ENCODE measurements at regions of chr10 and their contacts with region 1.

Region 1: GRCh38 chr10:112969542-112969941 is 19.5 kb downstream of the TCF7L2 start:
- DNase-seq: no peak
- ATAC-seq: no peak
- H3K4me3 ChIP-seq: no peak overlapping the region
- H3K4me3 Mint-ChIP-seq: no peak overlapping the region
- H3K27ac ChIP-seq: no peak overlapping the region
- H3K27ac Mint-ChIP-seq: no peak overlapping the region
- H3K4me1 ChIP-seq: no peaks in the 10 kb centered on the region
- H3K4me1 Mint-ChIP-seq: no peaks in the 10 kb centered on the region
- H3K27me3 ChIP-seq: no peaks in the 10 kb centered on the region
- H3K27me3 Mint-ChIP-seq: peaks cover 0 to 3% of the 10 kb centered on the region in 2 donors

Region 2: DNA sequence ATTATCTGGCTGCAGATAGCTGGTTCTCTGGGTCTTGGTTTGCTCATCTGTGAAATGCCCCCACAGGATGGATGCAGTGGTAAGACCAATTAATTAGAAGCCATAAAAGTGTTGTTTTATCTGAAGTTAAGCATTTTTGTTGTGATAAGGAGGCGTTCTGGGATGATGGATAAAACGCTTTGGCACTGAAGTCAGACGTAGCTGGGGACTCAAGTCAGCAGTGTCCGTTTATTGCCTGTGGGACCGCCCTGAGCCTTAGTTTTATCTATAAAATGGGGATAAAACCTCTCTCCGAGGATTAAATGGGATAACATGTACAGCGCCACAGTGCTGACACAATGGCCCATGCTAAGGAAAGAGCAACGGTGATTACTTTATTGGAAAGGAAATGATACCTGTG is 15.2 kb after region 1 on chr10:
- CTCF ChIA-PET with region 1: no interaction called
- POLR2A ChIA-PET with region 1: interaction called in 1 of 2 experiments, 25 read pairs
- DNase-seq: no peak
- ATAC-seq: no peak
- H3K4me3 ChIP-seq: no peak overlapping the region
- H3K4me3 Mint-ChIP-seq: no peak overlapping the region
- H3K27ac ChIP-seq: no peak overlapping the region
- H3K27ac Mint-ChIP-seq: no peak overlapping the region
- H3K4me1 ChIP-seq: peaks cover 12 to 13% of the 10 kb centered on the region in 2 experiments
- H3K4me1 Mint-ChIP-seq: peaks cover 17 to 33% (median 25%) of the 10 kb centered on the region in 3 donors
- H3K27me3 ChIP-seq: peaks cover 0 to 6% of the 10 kb centered on the region in 2 experiments
- H3K27me3 Mint-ChIP-seq: peaks cover 37 to 46% of the 10 kb centered on the region in 2 donors

Region 3: DNA sequence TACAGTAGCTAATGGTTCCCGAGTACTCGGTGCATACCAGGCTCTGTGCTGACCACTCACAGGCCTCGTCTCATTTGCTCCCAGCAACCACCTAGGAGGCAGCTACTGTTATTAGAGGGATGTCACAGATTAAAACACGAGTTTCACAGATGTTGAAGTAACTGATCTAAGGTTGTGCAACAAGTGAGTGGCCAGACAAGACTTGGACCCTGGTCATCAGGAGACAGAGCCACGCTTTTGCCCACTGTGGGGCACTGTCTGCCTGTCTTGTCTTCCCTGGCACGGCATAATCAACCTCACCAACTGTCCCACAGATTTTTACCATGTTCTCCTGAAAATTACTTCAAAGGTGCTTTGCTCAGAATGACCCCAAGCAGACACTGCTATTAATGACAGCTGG is 471.7 kb after region 1 on chr10:
- CTCF ChIA-PET with region 1: no interaction called
- POLR2A ChIA-PET with region 1: no interaction called
- DNase-seq: no peak
- ATAC-seq: no peak
- H3K4me3 ChIP-seq: no peak overlapping the region
- H3K4me3 Mint-ChIP-seq: no peak overlapping the region
- H3K27ac ChIP-seq: no peak overlapping the region
- H3K27ac Mint-ChIP-seq: no peak overlapping the region
- H3K4me1 ChIP-seq: no peaks in the 10 kb centered on the region
- H3K4me1 Mint-ChIP-seq: no peaks in the 10 kb centered on the region
- H3K27me3 ChIP-seq: no peaks in the 10 kb centered on the region
- H3K27me3 Mint-ChIP-seq: peaks cover 5 to 10% of the 10 kb centered on the region in 2 donors

Region 4: GRCh38 chr10:113746217-113746957 is 776.8 kb after region 1 on chr10:
- CTCF ChIA-PET with region 1: no interaction called
- POLR2A ChIA-PET with region 1: no interaction called
- DNase-seq: no peak
- ATAC-seq: no peak
- H3K4me3 ChIP-seq: no peak overlapping the region
- H3K4me3 Mint-ChIP-seq: no peak overlapping the region
- H3K27ac ChIP-seq: no peak overlapping the region
- H3K27ac Mint-ChIP-seq: no peak overlapping the region
- H3K4me1 ChIP-seq: no peaks in the 10 kb centered on the region
- H3K4me1 Mint-ChIP-seq: no peaks in the 10 kb centered on the region
- H3K27me3 ChIP-seq: peaks cover 0 to 4% of the 10 kb centered on the region in 2 experiments
- H3K27me3 Mint-ChIP-seq: peaks cover 14 to 29% of the 10 kb centered on the region in 2 donors

Measured in T-cell (primary cell).